ENCODE measurements at regions of chr17 and their contacts with region 1.

Region 1: GRCh38 chr17:2122641-2123302 is 67.9 kb downstream of the HIC1 start:
- DNase-seq: peak; percentile 15 to 49
- ATAC-seq: peak; percentile 67 to 88 (median 72)
- H3K4me3 ChIP-seq: no peak overlapping the region
- H3K4me3 Mint-ChIP-seq: peak overlapping the region; percentile 81
- H3K27ac ChIP-seq: no peak overlapping the region
- H3K27ac Mint-ChIP-seq: peak overlapping the region; percentile 49 to 85
- H3K4me1 ChIP-seq: peaks cover 22% of the 10 kb centered on the region
- H3K4me1 Mint-ChIP-seq: peaks cover 27 to 32% of the 10 kb centered on the region in 2 donors
- H3K27me3 ChIP-seq: no peaks in the 10 kb centered on the region
- H3K27me3 Mint-ChIP-seq: no peaks in the 10 kb centered on the region
- CTCF ChIP-seq: no peak

Region 2: GRCh38 chr17:2137342-2138098 is 14.7 kb after region 1 on chr17:
- intact Hi-C with region 1: loop called (anchors 2 kb)
- DNase-seq: no peak
- ATAC-seq: peak in 1 of 3 donors; percentile 37
- H3K4me3 ChIP-seq: no peak overlapping the region
- H3K4me3 Mint-ChIP-seq: peak overlapping the region; percentile 43
- H3K27ac ChIP-seq: peak overlapping the region; percentile 46
- H3K27ac Mint-ChIP-seq: peak overlapping the region; percentile 90
- H3K4me1 ChIP-seq: peaks cover 16% of the 10 kb centered on the region
- H3K4me1 Mint-ChIP-seq: peaks cover 19 to 21% of the 10 kb centered on the region in 2 donors
- H3K27me3 ChIP-seq: no peaks in the 10 kb centered on the region
- H3K27me3 Mint-ChIP-seq: no peaks in the 10 kb centered on the region
- CTCF ChIP-seq: no peak

Region 3: DNA sequence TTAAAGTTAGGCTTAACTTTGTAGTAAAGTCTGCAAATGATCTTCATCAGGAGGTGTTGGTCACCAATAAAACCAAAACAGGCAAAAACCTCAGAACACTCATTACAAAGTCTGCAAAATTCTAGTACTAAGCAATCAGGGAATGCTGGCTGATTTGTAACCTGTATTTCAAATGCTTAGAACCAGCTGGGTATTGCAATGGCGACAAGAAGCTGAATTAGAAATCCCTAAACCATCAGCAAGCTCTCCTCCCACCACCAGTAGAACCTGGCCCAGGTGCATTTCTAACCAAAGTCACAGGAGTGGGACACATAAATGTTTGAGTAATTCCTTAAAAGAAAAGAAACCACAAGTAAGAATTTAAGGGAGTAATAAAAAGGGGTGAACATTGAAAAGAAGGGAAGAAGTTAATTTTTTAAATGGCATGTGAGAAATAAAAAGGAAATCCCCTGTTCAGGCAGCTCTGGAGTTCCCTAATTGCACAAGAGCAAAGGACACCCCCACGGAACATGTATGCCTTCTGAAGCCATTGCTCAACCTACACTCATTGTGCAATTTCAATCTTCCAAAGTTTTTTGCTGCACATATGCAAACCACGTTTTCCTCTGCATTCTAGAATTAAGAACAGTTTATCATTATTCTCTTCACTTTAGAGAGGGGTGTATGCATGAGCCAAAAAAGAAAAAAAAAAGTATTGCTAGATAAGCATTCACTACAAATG is 35.1 kb after region 1 on chr17:
- intact Hi-C with region 1: loop called (anchors 5 kb)
- DNase-seq: no peak
- ATAC-seq: peak in 2 of 3 donors; percentile 40 to 41
- H3K4me3 ChIP-seq: no peak overlapping the region
- H3K4me3 Mint-ChIP-seq: no peak overlapping the region
- H3K27ac ChIP-seq: no peak overlapping the region
- H3K27ac Mint-ChIP-seq: peak overlapping the region; percentile 67 to 73
- H3K4me1 ChIP-seq: peaks cover 9% of the 10 kb centered on the region
- H3K4me1 Mint-ChIP-seq: peaks cover 30 to 31% of the 10 kb centered on the region in 2 donors
- H3K27me3 ChIP-seq: no peaks in the 10 kb centered on the region
- H3K27me3 Mint-ChIP-seq: no peaks in the 10 kb centered on the region
- CTCF ChIP-seq: no peak

Region 4: DNA sequence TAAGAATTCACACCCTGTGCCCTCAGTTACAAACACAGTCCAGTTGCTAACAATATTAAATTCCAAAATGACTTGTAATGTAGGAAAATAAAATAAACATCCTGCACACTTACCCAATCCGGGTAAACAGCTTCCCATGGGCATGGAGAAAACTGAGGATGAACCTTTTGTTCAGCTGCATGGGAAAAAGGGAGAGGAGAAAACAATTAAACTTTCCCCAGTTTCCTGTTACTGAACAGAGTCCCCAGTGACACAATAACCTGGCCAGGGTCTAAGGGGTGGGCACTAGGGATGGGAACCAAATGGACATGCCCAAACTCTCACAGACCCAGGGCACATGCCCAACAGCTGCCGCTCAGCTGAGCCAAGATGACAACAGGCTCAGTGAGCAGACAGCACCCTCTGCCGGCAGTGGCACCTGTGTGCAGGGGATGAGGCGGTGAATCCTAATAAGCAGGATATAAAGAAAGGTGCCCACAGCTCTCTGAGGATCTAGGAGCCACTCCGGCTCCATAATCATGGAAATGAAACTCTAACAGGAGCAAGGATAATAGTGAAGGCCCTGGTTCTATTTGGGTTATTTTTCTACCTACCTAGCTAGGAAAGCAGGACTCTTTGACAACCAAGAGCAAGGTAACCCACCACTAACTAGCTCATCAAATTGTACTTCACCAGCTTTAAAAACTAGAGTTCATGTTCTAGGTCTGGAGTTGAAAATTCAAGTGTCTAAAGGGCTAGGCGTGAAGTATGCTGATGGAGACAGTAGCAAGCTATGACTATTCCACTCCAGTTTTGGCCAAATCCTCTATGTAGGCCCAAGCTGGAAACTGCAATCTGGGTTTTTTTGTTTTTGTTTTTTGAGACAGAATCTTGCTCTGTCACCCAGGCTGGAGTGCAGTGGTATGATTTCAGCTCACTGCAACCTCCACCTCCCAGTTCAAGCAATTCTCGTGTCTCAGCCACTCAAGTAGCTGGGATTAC is 122.1 kb after region 1 on chr17:
- intact Hi-C with region 1: loop called (anchors 1 kb)
- DNase-seq: peak; percentile 78 to 92
- ATAC-seq: peak; percentile 96 to 100 (median 100)
- H3K4me3 ChIP-seq: no peak overlapping the region
- H3K4me3 Mint-ChIP-seq: no peak overlapping the region
- H3K27ac ChIP-seq: no peak overlapping the region
- H3K27ac Mint-ChIP-seq: peak overlapping the region; percentile 11 to 73
- H3K4me1 ChIP-seq: peaks cover 8% of the 10 kb centered on the region
- H3K4me1 Mint-ChIP-seq: peaks cover 16 to 27% of the 10 kb centered on the region in 2 donors
- H3K27me3 ChIP-seq: no peaks in the 10 kb centered on the region
- H3K27me3 Mint-ChIP-seq: no peaks in the 10 kb centered on the region
- CTCF ChIP-seq: peak; percentile 97